Adrenal gland (tissue), 19 donors: ENCODE measurements at regions of chr7 and their contacts with region 1.

Region 1: DNA sequence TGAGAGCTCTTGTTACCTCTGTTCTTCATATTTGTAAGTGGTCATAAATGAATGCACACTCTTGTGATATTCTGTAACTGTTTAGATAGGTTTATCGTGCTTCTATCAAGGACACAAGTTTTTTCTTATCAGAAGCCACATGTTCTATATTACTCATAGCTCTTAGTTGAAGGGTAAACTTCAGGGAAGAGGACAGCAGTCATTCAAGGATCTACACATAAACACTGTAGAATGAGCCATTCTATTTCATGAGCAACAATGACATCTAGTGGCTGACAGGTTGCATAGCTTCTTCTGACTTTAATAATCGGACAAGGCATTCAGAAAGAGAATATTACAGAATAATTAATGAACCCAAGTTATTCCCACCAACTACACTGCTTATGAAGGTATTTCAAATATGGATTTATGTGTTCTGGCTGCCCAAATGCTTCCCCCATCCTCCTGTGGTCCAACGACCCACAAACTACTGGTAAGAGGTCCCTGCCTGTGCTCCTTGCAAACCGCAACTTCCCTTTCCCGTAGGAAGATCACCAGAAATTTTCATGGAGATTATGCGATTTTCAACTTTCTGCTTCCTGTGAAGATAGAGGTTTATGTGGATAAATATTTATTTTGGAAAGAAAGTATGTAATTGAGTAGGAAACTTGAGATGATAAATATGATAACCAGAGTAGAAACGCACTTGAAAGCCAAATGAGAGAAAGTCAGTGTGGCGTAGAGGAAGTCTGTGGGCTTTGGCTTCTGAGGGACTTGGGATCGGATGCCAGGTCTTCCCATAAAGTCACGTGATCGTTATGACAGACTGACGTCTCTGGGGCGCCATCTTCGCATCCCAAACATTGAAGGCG is 16.8 kb upstream of the ABCB5 start:
- DNase-seq: peak in 1 of 7 donors; percentile 8
- H3K4me3 ChIP-seq: no peak overlapping the region
- H3K27ac ChIP-seq: no peak overlapping the region
- H3K4me1 ChIP-seq: no peaks in the 10 kb centered on the region
- H3K27me3 ChIP-seq: no peaks in the 10 kb centered on the region
- CTCF ChIP-seq: peak; percentile 55 to 93 (median 88)
- POLR2A ChIP-seq: no peak

Region 2: DNA sequence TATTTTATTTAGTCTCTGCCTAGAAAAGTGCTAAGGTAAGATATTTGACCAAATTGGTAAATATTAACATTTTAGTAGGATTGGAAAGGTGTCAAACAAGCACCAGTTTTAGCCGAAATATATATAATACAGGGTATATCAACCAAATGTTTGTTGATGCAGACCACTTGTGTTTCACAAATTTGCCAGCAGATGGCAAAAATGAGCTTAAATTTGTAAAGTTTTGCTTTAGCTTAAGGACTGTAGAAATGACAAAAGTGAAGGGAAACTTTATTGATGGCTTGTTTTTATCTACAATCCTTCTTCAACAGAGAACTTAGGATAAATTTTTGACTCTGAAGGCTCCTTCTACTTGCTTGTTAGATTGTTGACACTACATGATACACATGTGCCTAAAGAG is 885.0 kb before region 1 on chr7:
- intact Hi-C with region 1: loop called in 1 of 2 experiments (anchors 2 kb)
- DNase-seq: peak in 4 of 7 donors; percentile 19 to 55 (median 36)
- H3K4me3 ChIP-seq: no peak overlapping the region
- H3K27ac ChIP-seq: no peak overlapping the region
- H3K4me1 ChIP-seq: peaks cover 5 to 6% of the 10 kb centered on the region in 2 donors
- H3K27me3 ChIP-seq: no peaks in the 10 kb centered on the region
- CTCF ChIP-seq: peak; percentile 43 to 74 (median 54)
- POLR2A ChIP-seq: no peak

Region 3: GRCh38 chr7:19747740-19748339 is 850.8 kb before region 1 on chr7:
- intact Hi-C with region 1: loop called (anchors 10 kb)
- DNase-seq: no peak
- H3K4me3 ChIP-seq: no peak overlapping the region
- H3K27ac ChIP-seq: no peak overlapping the region
- H3K4me1 ChIP-seq: no peaks in the 10 kb centered on the region
- H3K27me3 ChIP-seq: no peaks in the 10 kb centered on the region
- CTCF ChIP-seq: peak; percentile 36 to 73 (median 50)
- POLR2A ChIP-seq: no peak

Region 4: GRCh38 chr7:20700453-20701227 is 102.0 kb after region 1 on chr7:
- intact Hi-C with region 1: no loop called
- DNase-seq: no peak
- H3K4me3 ChIP-seq: no peak overlapping the region
- H3K27ac ChIP-seq: no peak overlapping the region
- H3K4me1 ChIP-seq: no peaks in the 10 kb centered on the region
- H3K27me3 ChIP-seq: no peaks in the 10 kb centered on the region
- CTCF ChIP-seq: no peak
- POLR2A ChIP-seq: no peak